ENCODE measurements at regions of chr13 and their contacts with region 1.

Region 1: GRCh38 chr13:97109841-97110492 is 112.2 kb upstream of the MBNL2 start:
- DNase-seq: peak; percentile 78
- ATAC-seq: peak; percentile 98
- H3K4me3 Mint-ChIP-seq: no peak overlapping the region
- H3K27ac Mint-ChIP-seq: no peak overlapping the region
- H3K4me1 Mint-ChIP-seq: peaks cover 13% of the 10 kb centered on the region
- H3K27me3 Mint-ChIP-seq: peaks cover 23% of the 10 kb centered on the region

Region 2: GRCh38 chr13:97165502-97166425 is 55.8 kb after region 1 on chr13:
- CTCF ChIA-PET with region 1: no interaction called
- DNase-seq: no peak
- ATAC-seq: no peak
- H3K4me3 Mint-ChIP-seq: no peak overlapping the region
- H3K27ac Mint-ChIP-seq: no peak overlapping the region
- H3K4me1 Mint-ChIP-seq: no peaks in the 10 kb centered on the region
- H3K27me3 Mint-ChIP-seq: peaks cover 4% of the 10 kb centered on the region

Region 3: DNA sequence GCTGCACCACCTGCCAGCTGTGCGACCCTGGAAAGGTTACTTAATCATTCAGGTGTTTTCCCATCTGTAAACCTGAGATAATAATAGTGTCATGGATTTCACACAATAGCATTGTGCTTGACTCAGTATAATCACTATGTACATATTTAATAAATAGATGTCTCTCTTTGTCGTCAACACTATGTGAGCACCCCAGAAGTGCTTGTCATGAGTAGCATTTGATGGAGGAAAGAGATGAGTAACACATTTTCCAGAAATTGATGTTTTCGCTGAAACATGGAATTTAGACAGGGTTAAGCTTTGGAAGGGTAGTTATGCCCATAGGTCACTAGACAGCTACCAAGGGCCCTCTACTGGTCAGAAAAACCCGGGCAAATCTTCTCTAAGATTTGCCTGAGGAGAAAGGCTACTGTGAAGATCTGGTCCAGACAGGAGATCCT is 102.7 kb after region 1 on chr13:
- CTCF ChIA-PET with region 1: interaction called, 13 read pairs
- DNase-seq: no peak
- ATAC-seq: no peak
- H3K4me3 Mint-ChIP-seq: no peak overlapping the region
- H3K27ac Mint-ChIP-seq: no peak overlapping the region
- H3K4me1 Mint-ChIP-seq: peaks cover 37% of the 10 kb centered on the region
- H3K27me3 Mint-ChIP-seq: no peaks in the 10 kb centered on the region

Region 4: GRCh38 chr13:97221989-97222700 is 112.2 kb after region 1 on chr13 and contains the start of gene MBNL2:
- CTCF ChIA-PET with region 1: interaction called, 38 read pairs
- DNase-seq: peak; percentile 92
- ATAC-seq: peak; percentile 97
- H3K4me3 Mint-ChIP-seq: peak within 1 kb of the TSS; percentile 85
- H3K27ac Mint-ChIP-seq: peak within 1 kb of the TSS; percentile 90
- H3K4me1 Mint-ChIP-seq: peaks cover 49% of the 10 kb centered on the region
- H3K27me3 Mint-ChIP-seq: no peaks in the 10 kb centered on the region
- total RNA-seq, gene MBNL2: 9.7 to 13.4 TPM

Region 5: DNA sequence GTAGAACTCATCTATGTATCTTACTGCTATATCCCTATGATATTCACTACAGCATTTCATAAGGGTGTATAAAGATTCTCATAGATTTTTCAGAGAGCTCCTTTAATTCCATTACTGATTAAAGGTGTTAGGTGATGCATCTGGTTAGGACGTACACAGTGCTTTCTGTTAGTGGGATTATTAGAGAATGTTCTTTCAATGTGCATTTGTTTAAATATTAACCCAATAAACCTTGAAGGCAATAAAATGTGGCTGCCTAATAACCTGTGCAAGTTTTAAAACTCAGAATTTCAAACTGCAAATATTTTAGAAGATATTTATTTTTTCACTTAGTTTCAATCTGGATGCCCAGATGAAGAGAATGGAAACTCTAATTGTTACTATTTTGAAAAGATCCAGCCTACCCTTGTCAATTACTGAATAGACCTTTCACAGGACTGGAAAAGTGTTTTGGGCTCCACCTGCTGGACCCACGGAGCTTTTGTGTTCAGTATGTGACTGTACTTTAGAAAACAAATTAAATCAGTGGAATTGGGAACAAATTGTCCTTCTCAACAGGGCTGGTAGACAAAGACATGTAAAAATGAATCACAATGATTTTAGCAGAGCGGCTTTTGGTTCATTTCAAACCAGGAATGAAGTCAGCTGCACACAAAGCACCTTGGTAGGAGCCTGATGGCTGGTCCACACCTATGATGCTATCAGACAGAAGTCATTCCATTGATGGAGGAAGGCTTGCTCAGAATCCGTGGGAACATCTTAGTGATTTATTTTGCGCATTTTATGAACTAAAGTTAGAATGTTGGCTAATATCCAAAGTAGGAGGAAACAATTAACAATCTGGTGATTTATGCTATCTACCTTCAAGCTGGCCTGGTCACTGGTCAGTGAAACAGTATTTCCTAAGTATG is 234.6 kb after region 1 on chr13:
- CTCF ChIA-PET with region 1: interaction called, 68 read pairs
- DNase-seq: peak; percentile 63
- ATAC-seq: peak; percentile 65
- H3K4me3 Mint-ChIP-seq: no peak overlapping the region
- H3K27ac Mint-ChIP-seq: no peak overlapping the region
- H3K4me1 Mint-ChIP-seq: peaks cover 11% of the 10 kb centered on the region
- H3K27me3 Mint-ChIP-seq: no peaks in the 10 kb centered on the region

Region 6: DNA sequence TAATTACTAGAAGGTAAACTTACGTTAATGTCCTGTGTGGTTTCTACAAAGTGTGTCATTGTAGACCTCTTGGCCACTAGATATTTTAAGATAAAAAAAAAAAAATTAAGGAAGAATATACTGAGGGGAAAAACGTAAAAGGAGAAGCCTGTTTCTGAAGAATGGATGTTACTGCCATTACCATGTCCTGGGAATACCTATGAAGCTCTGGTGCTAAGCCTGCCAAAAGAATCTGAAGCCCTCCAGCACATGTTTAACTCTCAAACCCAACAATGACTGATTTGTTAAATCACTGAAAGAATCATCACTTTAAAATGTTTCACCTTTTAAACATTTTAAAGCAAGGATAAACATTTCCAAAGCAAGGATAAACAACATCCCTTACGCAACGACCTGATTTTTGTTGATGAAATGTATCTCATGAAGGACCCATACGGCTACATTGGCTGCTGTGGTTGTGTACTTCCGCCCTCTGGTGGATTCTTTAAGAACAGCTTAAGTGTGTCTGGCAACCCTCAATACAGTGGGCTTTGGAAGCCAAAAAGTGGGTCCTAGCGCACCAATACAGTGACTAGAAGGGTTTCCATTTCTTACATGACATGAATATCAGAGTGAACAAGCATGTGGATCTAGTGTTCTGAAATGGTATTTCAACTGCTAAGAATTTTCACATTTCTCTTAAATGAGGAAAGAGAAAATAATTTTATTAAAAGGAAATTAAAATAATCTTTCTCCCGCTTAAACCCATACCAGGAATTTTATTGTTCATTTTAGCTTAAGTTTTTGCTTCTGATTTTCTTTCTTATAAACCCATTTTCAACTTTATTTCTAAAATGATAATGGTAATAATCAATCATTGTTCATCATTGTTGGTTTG is 249.5 kb after region 1 on chr13:
- CTCF ChIA-PET with region 1: interaction called, 114 read pairs
- DNase-seq: peak; percentile 61
- ATAC-seq: peak; percentile 89
- H3K4me3 Mint-ChIP-seq: no peak overlapping the region
- H3K27ac Mint-ChIP-seq: no peak overlapping the region
- H3K4me1 Mint-ChIP-seq: no peaks in the 10 kb centered on the region
- H3K27me3 Mint-ChIP-seq: no peaks in the 10 kb centered on the region

Measured in activated CD8-positive, alpha-beta memory T cell treated with anti-CD3 and anti-CD28 coated beads, Interleukin-2, amount 10 ng/mL, durations not matched to agents 7 days and 5 days (primary cell).